ENCODE measurements at regions of chr4 and their contacts with region 1.

Region 1: GRCh38 chr4:77044461-77045150 is 31.2 kb downstream of the CCNI start:
- DNase-seq: peak in 1 of 2 experiments; percentile 29
- H3K4me3 ChIP-seq: no peak overlapping the region
- H3K4me3 Mint-ChIP-seq: peak overlapping the region; percentile 18
- H3K27ac Mint-ChIP-seq: peak overlapping the region; percentile 67
- H3K4me1 ChIP-seq: peaks cover 51% of the 10 kb centered on the region
- H3K4me1 Mint-ChIP-seq: peaks cover 18% of the 10 kb centered on the region
- H3K27me3 ChIP-seq: no peaks in the 10 kb centered on the region
- H3K27me3 Mint-ChIP-seq: no peaks in the 10 kb centered on the region
- CTCF ChIP-seq: peak in 1 of 2 experiments; percentile 54

Region 2: DNA sequence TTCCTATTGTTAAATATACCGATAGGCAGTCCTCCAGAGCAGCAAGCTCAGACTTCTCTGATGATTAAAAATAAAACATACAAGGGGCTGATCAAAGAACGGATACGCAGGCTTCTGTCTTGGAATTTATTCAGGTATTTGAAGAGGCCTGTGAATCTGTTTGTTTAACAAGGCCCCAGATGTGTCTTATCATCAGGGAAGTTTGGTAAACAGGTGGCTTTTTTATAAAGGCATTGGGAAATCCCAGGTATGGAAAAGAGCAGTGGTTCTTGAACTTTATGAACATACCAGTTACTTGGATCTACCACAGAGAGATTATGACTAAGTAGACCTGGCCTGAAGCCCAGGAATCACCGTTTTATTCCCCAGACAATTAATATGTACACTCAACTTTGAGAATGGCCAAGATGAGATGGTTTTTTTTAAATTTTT is 194.6 kb before region 1 on chr4:
- CTCF ChIA-PET with region 1: no interaction called
- POLR2A ChIA-PET with region 1: no interaction called
- intact Hi-C with region 1: loop called (anchors 5 kb)
- DNase-seq: peak in 1 of 2 experiments; percentile 58
- H3K4me3 ChIP-seq: no peak overlapping the region
- H3K4me3 Mint-ChIP-seq: peak overlapping the region; percentile 37
- H3K27ac Mint-ChIP-seq: no peak overlapping the region
- H3K4me1 ChIP-seq: peaks cover 18% of the 10 kb centered on the region
- H3K4me1 Mint-ChIP-seq: peaks cover 12% of the 10 kb centered on the region
- H3K27me3 ChIP-seq: no peaks in the 10 kb centered on the region
- H3K27me3 Mint-ChIP-seq: no peaks in the 10 kb centered on the region
- CTCF ChIP-seq: no peak

Region 3: DNA sequence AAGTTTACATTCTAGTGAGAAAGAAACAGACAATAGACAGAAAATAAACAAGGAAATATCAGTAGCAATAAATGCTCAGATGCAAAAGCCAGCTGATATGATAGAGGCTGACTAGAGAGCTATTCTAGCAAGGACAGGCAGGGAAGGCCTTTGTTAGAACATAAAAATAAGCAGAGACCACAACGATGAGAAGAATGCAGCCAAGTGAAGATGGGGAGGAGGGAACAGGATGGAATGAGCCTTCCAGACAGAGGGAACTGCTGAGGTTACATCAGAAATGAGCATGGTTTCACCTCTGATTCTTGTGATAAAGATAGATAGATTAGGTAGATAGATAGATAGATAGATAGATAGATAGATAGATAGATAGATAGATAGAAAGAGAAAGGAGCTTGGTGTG is 139.1 kb before region 1 on chr4:
- CTCF ChIA-PET with region 1: no interaction called
- POLR2A ChIA-PET with region 1: no interaction called
- intact Hi-C with region 1: no loop called
- DNase-seq: no peak
- H3K4me3 ChIP-seq: no peak overlapping the region
- H3K4me3 Mint-ChIP-seq: no peak overlapping the region
- H3K27ac Mint-ChIP-seq: no peak overlapping the region
- H3K4me1 ChIP-seq: peaks cover 21% of the 10 kb centered on the region
- H3K4me1 Mint-ChIP-seq: no peaks in the 10 kb centered on the region
- H3K27me3 ChIP-seq: no peaks in the 10 kb centered on the region
- H3K27me3 Mint-ChIP-seq: no peaks in the 10 kb centered on the region
- CTCF ChIP-seq: no peak

Region 4: DNA sequence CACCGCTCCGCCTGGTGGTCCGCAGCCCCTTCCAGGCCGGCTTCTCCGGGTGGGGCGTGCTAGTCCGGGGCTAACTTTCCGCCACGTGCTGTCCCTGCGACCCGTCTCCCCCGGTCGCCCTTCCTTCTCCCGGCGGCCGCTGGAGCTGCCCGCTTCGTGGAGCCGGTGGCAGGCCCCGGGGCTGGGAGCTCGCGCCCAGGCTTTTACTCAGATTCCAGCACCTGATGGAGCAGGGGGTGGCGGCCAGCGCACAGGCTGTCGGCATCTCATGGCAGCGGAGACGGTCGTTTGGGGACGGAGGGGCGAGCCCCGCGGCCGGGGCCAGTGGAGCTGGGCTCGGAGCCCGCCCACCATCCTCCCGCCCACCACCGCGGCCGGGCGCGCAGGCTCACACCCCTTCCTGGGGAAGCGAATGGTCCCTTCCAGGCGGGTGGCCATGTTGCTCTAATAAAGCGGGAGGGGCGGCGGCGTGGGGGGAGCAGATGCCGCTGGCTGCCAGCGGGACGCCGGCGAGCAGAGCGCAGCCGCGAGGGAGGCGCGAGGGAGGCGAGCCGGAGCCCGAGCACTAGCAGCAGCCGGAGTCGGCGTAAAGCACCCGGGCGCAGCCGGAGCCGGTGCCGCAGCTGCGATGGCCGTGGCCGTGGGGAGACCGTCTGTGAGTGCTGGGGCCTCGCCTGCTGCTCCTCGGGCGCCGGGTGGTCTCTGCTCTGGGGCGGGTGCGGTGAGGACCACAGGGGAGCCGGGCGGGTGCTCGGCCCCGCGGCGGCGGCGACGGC is 95.1 kb before region 1 on chr4 and contains the start of gene SEPTIN11:
- CTCF ChIA-PET with region 1: interaction called, 3 read pairs
- POLR2A ChIA-PET with region 1: interaction called, 8 read pairs
- intact Hi-C with region 1: loop called (anchors 1 kb)
- DNase-seq: peak; percentile 94 to 95
- H3K4me3 ChIP-seq: peak within 1 kb of the TSS; percentile 94
- H3K4me3 Mint-ChIP-seq: peak within 1 kb of the TSS; percentile 100
- H3K27ac Mint-ChIP-seq: peak within 1 kb of the TSS; percentile 97
- H3K4me1 ChIP-seq: peaks cover 5% of the 10 kb centered on the region; the same call in 1 of the 2 replicates
- H3K4me1 Mint-ChIP-seq: peaks cover 12% of the 10 kb centered on the region
- H3K27me3 ChIP-seq: no peaks in the 10 kb centered on the region
- H3K27me3 Mint-ChIP-seq: no peaks in the 10 kb centered on the region
- CTCF ChIP-seq: no peak
- total RNA-seq, gene SEPTIN11: 119 and 127 TPM in 2 replicates

Measured in Caco-2 (cell line).